Panc1 (cell line): ENCODE measurements at regions of chr11 and their contacts with region 1.

Region 1: GRCh38 chr11:30143098-30143705 is 87.6 kb upstream of the FSHB start:
- DNase-seq: peak; percentile 25
- ATAC-seq: no peak
- H3K4me3 ChIP-seq: no peak overlapping the region
- H3K27ac ChIP-seq: no peak overlapping the region
- H3K4me1 ChIP-seq: no peaks in the 10 kb centered on the region
- H3K27me3 ChIP-seq: no peaks in the 10 kb centered on the region
- CTCF ChIP-seq: peak; percentile 76

Region 2: GRCh38 chr11:29432719-29433325 is 710.4 kb before region 1 on chr11:
- CTCF ChIA-PET with region 1: no interaction called
- POLR2A ChIA-PET with region 1: no interaction called
- in situ Hi-C with region 1: no loop called
- intact Hi-C with region 1: loop called (anchors 5 kb)
- DNase-seq: no peak
- ATAC-seq: no peak
- H3K4me3 ChIP-seq: no peak overlapping the region
- H3K27ac ChIP-seq: no peak overlapping the region
- H3K4me1 ChIP-seq: no peaks in the 10 kb centered on the region
- H3K27me3 ChIP-seq: no peaks in the 10 kb centered on the region
- CTCF ChIP-seq: peak; percentile 68; the same call in 1 of the 2 replicates

Region 3: DNA sequence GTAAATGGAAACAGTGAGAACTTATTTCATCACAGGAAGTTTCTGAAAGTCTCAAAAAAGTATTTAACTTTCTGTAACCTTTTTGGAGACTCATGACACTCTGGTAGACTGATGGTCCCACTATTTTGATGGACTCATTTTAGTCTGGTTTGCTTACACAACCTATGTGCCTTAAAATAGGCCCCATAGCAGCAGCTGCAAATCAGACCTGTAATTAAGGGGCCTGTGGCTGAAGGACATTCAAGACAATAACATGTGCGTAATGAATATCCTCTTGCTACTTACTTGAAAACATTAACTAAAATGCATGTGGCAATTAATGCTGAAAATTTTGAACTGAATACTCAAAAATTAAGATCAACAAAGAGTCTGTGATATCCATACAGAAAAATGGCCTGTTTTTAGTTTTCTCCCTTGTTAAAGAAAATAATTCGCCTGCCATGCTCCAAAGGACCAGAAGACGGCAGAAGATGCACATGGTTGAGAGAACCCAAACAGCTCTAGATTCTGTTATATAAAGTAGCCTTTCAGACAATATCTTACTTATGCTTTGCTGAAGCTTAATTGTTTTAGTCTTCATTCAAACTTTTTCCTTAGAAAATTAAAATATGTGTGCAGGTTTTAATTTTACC is 694.8 kb before region 1 on chr11:
- CTCF ChIA-PET with region 1: interaction called, 5 read pairs
- POLR2A ChIA-PET with region 1: no interaction called
- in situ Hi-C with region 1: no loop called
- intact Hi-C with region 1: loop called (anchors 2 kb)
- DNase-seq: no peak
- ATAC-seq: no peak
- H3K4me3 ChIP-seq: no peak overlapping the region
- H3K27ac ChIP-seq: no peak overlapping the region
- H3K4me1 ChIP-seq: no peaks in the 10 kb centered on the region
- H3K27me3 ChIP-seq: no peaks in the 10 kb centered on the region
- CTCF ChIP-seq: peak; percentile 70; the same call in 1 of the 2 replicates

Region 4: GRCh38 chr11:30635401-30635989 is 492.3 kb after region 1 on chr11:
- CTCF ChIA-PET with region 1: no interaction called
- POLR2A ChIA-PET with region 1: no interaction called
- in situ Hi-C with region 1: no loop called
- intact Hi-C with region 1: no loop called
- DNase-seq: no peak
- ATAC-seq: no peak
- H3K4me3 ChIP-seq: no peak overlapping the region
- H3K27ac ChIP-seq: no peak overlapping the region
- H3K4me1 ChIP-seq: no peaks in the 10 kb centered on the region
- H3K27me3 ChIP-seq: no peaks in the 10 kb centered on the region
- CTCF ChIP-seq: no peak